Posterior vena cava (tissue), 2 donors: ENCODE measurements at regions of chr18 and their contacts with region 1.

Region 1: GRCh38 chr18:66316701-66317100 is 287.2 kb downstream of the CDH19 start:
- DNase-seq: no peak

Region 2: GRCh38 chr18:65372904-65373303 is 943.8 kb before region 1 on chr18:
- intact Hi-C with region 1: no loop called
- DNase-seq: no peak

Region 3: GRCh38 chr18:65523461-65523860 is 793.2 kb before region 1 on chr18:
- intact Hi-C with region 1: no loop called
- DNase-seq: no peak

Region 4: GRCh38 chr18:66342577-66342976 is 25.9 kb after region 1 on chr18:
- intact Hi-C with region 1: loop called in 1 of 2 experiments (anchors 2 kb)
- DNase-seq: no peak